ENCODE measurements at regions of chr2 and their contacts with region 1.

Region 1: DNA sequence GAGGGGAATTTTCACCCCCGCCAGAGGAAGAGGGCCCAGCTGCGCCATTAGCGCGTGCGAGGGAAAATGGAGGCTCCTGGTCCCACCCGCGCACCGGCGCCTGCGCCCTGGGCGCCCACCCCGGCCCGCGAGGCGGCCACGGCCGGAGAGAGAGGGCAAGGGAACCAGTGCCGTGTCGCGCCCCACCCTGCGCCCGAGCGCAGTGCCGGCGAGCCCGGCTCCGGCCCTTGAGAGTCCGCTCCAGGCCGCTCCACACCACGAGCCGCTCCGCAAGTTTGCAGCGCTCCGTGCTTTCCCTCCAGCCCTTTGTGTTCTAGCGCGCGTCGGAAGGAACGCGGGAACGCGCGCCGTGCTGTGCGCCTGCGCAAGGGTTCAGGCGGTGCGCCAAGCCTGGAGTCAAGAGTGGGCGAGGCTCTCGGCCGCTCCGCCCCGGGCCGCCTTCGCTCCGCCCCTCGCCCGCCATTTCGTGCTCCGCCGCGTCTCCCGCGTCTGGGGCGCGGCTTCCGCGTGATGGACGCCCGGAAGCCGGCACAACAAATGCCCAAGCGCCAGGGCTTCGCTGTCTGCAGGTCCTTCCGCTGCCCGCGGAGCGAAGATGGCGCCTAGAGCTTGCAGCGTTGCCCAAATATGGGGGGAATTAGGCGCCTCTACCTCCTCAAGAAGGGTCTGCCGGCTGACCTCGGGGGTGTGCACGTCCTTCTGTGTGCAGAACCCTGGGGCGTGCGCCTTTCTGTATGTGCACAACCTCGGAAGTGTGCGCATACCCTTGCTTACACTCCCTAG is 46.1 kb upstream of the PTMA start:
- DNase-seq: peak; percentile 61
- H3K4me3 ChIP-seq: peak overlapping the region; percentile 43
- CTCF ChIP-seq: no peak

Region 2: DNA sequence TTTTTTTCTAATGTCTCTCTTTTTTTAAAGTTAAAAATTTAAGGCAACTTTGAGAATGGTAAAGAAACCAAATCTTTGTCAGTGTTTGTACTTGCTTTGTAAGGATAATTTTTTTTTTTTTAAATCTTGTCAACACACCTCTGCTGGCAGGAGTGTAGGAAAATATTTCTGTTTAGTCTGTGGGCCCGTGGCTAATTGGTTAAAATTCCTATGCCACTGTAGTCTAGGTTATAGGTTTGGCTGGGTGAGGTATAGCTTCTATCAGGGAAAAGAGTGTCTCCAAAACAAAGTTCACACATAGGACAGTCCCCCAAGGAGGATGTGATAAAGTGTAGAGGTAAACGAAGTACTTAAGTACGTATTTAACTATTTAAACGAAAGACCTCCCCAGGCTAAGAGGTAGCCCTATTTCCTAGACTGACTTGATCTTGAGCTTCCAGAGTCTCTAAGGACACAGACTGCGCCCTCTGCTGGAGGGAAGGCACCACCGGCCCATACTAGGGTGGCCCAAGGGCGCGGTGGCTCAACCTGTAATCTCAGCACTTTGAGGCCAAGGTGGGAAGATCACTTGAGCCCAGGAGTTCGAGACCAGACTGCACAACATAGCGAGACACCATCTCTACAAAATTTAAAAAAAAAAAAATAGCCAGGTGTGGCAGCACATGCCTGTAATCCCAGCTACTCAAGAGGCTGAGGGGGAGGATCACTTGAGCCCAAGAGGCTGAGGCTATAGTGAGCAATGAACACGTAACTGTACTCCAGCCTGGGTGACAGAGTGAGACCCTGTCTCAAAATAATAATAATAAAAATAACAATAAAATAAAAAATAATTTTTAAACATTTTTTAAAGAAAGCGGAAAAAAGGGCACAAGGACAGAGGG is 60.6 kb before region 1 on chr2:
- CTCF ChIA-PET with region 1: no interaction called
- POLR2A ChIA-PET with region 1: no interaction called
- DNase-seq: no peak
- H3K4me3 ChIP-seq: no peak overlapping the region
- CTCF ChIP-seq: peak; percentile 90

Region 3: GRCh38 chr2:231642631-231643494 is 19.4 kb before region 1 on chr2:
- CTCF ChIA-PET with region 1: interaction called, 14 read pairs
- POLR2A ChIA-PET with region 1: interaction called, 20 read pairs
- DNase-seq: peak; percentile 72
- H3K4me3 ChIP-seq: no peak overlapping the region; the same call in 1 of the 2 replicates
- CTCF ChIP-seq: no peak

Region 4: DNA sequence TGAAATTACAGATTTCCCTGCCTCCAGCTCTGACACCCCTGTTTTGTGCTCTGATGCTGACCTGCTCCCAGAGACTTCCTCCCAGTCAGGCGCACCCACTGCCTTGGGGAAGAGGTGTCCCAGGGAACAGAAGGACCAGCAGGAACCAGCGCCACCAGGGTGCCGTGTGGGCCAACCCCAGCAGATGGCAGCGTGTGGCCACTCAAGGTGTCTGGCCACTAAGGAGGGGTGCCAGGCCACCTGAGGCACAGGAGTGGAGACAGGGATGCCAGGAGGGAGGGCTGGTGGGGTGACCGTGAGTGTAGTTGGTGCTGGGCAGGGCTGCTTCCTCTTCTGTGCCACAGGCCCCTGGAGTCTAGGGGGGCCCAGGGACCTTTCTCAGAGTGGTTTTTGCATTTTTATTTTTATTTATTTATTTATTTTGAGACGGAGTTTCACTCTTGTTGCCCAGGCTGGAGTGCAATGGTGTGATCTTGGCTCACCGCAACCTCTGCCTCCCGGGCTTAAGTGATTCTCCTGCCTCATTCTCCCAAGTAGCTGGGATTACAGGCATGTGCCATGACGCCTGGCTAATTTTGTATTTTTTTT is 13.5 kb before region 1 on chr2:
- CTCF ChIA-PET with region 1: interaction called, 14 read pairs
- POLR2A ChIA-PET with region 1: interaction called, 4 read pairs
- DNase-seq: no peak
- H3K4me3 ChIP-seq: no peak overlapping the region
- CTCF ChIP-seq: peak; percentile 87

Region 5: DNA sequence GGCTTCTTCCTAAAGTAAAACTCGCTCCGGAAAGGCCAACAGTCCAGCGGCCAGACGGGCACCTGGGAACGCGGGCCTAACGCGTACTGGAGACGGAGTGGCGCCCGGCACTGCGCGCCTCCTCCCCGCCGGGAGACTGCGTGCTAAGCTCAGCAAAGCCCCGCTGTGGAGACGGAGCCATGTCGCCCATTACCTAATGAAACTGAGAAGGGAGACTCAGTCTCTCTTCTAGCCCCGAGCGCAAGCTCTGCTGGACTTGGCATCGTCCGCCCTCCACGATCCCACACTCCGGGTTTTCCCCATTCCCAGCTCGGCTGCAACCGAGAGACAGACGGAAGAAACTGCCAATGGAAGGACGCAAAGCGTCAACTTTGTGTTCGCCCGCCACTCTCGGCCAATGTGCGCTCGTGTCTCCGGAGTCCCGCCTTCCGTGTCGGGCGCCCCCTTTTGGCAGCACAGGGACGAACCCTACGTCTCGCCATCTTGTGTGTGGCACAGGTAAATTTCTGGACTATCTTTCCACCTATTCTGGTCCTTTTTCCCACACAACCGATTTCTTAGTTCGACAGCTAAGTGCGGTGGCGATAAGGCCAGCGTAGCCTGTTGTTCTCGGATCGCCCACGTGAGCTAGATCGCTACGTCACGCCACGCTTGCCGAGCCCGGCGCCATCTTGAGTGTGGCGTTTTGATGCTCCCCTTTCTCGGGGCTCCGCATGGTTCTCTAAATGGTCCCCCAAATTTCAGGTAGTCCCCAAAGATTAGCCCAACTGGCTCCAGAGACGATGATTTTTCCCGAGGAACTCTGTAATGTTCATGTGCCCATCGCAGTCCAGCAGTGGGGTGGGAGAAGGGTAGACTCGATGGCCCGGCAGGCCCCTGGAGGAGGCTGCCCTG is 44.8 kb after region 1 on chr2:
- CTCF ChIA-PET with region 1: interaction called, 9 read pairs
- POLR2A ChIA-PET with region 1: interaction called, 11 read pairs
- DNase-seq: peak; percentile 90
- H3K4me3 ChIP-seq: peak overlapping the region; percentile 75
- CTCF ChIP-seq: peak; percentile 93

Region 6: GRCh38 chr2:231745303-231746038 is 83.3 kb after region 1 on chr2:
- CTCF ChIA-PET with region 1: no interaction called
- POLR2A ChIA-PET with region 1: no interaction called
- DNase-seq: no peak
- H3K4me3 ChIP-seq: no peak overlapping the region
- CTCF ChIP-seq: no peak

Measured in AG04449 (cell line).